ENCODE measurements at regions of chr10 and their contacts with region 1.

Region 1: GRCh38 chr10:91389636-91390512 is 20.3 kb upstream of the HECTD2 start:
- DNase-seq: peak in 1 of 2 experiments; percentile 59
- H3K4me3 ChIP-seq: no peak overlapping the region
- H3K4me3 Mint-ChIP-seq: no peak overlapping the region
- H3K27ac Mint-ChIP-seq: no peak overlapping the region
- H3K4me1 ChIP-seq: peaks cover 5% of the 10 kb centered on the region; the same call in 1 of the 2 replicates
- H3K4me1 Mint-ChIP-seq: no peaks in the 10 kb centered on the region
- H3K27me3 ChIP-seq: peaks cover 1% of the 10 kb centered on the region; the same call in 1 of the 2 replicates
- H3K27me3 Mint-ChIP-seq: peaks cover 19% of the 10 kb centered on the region
- CTCF ChIP-seq: peak; percentile 49 to 53

Region 2: DNA sequence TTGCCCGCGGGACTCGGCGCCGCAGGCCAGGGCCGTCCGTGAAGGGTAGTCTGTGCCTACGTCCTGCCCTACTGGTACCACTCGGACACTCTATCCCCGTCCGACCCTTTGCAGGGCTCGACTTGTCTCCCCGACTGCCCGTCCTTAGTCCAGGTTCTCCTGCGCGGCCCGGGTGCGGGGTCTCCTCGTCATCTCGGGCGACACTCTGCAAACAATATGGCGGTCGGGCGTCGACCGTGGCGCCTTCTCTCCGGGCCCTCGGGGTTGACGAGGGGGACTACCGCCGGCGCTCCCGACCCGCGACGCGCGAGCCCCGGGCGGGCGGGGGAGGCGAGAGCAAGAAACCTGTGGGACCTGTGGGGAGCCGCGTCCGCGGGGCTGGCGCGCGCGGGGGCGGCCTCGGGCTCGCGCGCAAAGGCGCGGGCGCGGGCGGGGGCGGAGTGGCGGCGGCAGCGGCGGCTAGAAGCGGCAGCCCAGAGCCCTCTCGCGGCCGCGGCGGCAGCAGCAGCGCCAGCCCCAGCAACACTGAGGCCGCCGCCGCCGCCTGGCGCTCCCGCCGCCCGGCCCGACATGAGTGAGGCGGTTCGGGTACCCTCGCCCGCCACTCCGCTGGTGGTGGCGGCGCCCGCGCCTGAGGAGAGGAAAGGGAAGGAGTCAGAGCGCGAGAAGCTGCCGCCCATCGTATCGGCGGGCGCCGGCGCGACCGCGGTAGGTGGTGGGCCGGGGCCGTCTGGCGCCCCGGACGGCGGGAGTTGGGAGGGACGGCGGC is 20.2 kb after region 1 on chr10 and contains the start of gene HECTD2:
- CTCF ChIA-PET with region 1: no interaction called
- POLR2A ChIA-PET with region 1: no interaction called
- intact Hi-C with region 1: loop called (anchors 1 kb)
- DNase-seq: peak; percentile 75 to 87
- H3K4me3 ChIP-seq: peak within 1 kb of the TSS; percentile 98
- H3K4me3 Mint-ChIP-seq: peak within 1 kb of the TSS; percentile 86
- H3K27ac Mint-ChIP-seq: peak within 1 kb of the TSS; percentile 93
- H3K4me1 ChIP-seq: no peaks in the 10 kb centered on the region
- H3K4me1 Mint-ChIP-seq: no peaks in the 10 kb centered on the region
- H3K27me3 ChIP-seq: no peaks in the 10 kb centered on the region
- H3K27me3 Mint-ChIP-seq: peaks cover 13% of the 10 kb centered on the region
- CTCF ChIP-seq: peak; percentile 12 to 16
- total RNA-seq, gene HECTD2: 1.5 and 2.0 TPM in 2 replicates

Region 3: DNA sequence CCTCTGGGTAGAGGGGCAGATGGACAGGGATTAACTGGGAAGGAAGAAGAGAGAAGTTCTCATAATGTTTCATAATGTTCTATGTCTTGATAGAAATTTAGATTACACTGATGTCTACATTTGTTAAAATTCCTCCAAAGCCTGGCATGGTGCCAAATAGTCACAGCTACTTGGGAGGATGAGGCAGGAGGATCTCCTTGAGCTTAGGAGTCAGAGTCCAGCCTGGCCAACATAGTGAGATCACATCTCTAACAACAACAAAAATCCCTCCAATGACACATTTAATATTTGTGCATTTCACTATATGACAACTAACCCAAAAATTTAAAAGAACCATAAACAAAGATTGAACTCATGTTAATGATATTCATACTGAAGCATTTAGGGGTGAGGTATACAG is 276.0 kb after region 1 on chr10:
- CTCF ChIA-PET with region 1: no interaction called
- POLR2A ChIA-PET with region 1: no interaction called
- intact Hi-C with region 1: no loop called
- DNase-seq: no peak
- H3K4me3 ChIP-seq: no peak overlapping the region
- H3K4me3 Mint-ChIP-seq: no peak overlapping the region
- H3K27ac Mint-ChIP-seq: no peak overlapping the region
- H3K4me1 ChIP-seq: no peaks in the 10 kb centered on the region
- H3K4me1 Mint-ChIP-seq: no peaks in the 10 kb centered on the region
- H3K27me3 ChIP-seq: no peaks in the 10 kb centered on the region
- H3K27me3 Mint-ChIP-seq: peaks cover 9% of the 10 kb centered on the region
- CTCF ChIP-seq: no peak